CD14-positive monocyte (primary cell): ENCODE measurements at regions of chr21 and their contacts with region 1.

Region 1: DNA sequence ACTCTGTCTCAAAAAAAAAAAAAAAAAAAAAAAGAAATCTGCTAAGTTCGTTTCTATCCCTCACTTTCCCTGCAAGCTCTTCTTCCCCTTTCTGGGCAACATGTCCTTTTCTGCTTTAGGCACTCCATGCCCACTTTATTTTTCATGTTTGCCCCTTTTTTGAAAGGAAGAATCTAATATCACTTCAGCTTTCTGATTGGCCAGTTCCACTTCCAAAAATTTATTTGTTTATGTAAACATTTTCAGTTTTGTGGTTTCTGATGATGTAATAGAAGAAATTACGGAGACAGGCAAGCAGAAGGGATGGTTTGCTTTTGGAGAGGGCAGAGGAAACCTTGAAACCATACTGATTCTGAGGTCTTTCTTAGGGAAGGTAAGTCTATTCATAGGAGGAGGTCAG is 15.1 kb downstream of the IFNAR1 start:
- DNase-seq: peak in 2 of 3 donors; percentile 34 to 51
- H3K4me3 ChIP-seq: peak overlapping the region in 1 of 3 experiments; percentile 20
- H3K4me3 Mint-ChIP-seq: no peak overlapping the region
- H3K27ac ChIP-seq: peak overlapping the region; percentile 51 to 57
- H3K27ac Mint-ChIP-seq: peak overlapping the region; percentile 66 to 90 (median 85)
- H3K4me1 ChIP-seq: peaks cover 20% of the 10 kb centered on the region in 2 donors
- H3K4me1 Mint-ChIP-seq: peaks cover 22% of the 10 kb centered on the region
- H3K27me3 ChIP-seq: no peaks in the 10 kb centered on the region
- H3K27me3 Mint-ChIP-seq: no peaks in the 10 kb centered on the region
- CTCF ChIP-seq: no peak

Region 2: GRCh38 chr21:33428669-33429068 is 88.8 kb after region 1 on chr21:
- intact Hi-C with region 1: loop called in 1 of 2 experiments (anchors 5 kb)
- DNase-seq: no peak
- H3K4me3 ChIP-seq: no peak overlapping the region
- H3K4me3 Mint-ChIP-seq: no peak overlapping the region
- H3K27ac ChIP-seq: peak overlapping the region in 1 of 2 donors; percentile 26
- H3K27ac Mint-ChIP-seq: peak overlapping the region in 3 of 7 donors; percentile 30 to 81 (median 79)
- H3K4me1 ChIP-seq: peaks cover 24 to 31% of the 10 kb centered on the region in 2 donors
- H3K4me1 Mint-ChIP-seq: peaks cover 24% of the 10 kb centered on the region
- H3K27me3 ChIP-seq: no peaks in the 10 kb centered on the region
- H3K27me3 Mint-ChIP-seq: peaks cover 0 to 3% (median 1%) of the 10 kb centered on the region in 3 donors
- CTCF ChIP-seq: no peak